Naive thymus-derived CD4-positive, alpha-beta T cell (primary cell): ENCODE measurements at regions of chr12 and their contacts with region 1.

Region 1: DNA sequence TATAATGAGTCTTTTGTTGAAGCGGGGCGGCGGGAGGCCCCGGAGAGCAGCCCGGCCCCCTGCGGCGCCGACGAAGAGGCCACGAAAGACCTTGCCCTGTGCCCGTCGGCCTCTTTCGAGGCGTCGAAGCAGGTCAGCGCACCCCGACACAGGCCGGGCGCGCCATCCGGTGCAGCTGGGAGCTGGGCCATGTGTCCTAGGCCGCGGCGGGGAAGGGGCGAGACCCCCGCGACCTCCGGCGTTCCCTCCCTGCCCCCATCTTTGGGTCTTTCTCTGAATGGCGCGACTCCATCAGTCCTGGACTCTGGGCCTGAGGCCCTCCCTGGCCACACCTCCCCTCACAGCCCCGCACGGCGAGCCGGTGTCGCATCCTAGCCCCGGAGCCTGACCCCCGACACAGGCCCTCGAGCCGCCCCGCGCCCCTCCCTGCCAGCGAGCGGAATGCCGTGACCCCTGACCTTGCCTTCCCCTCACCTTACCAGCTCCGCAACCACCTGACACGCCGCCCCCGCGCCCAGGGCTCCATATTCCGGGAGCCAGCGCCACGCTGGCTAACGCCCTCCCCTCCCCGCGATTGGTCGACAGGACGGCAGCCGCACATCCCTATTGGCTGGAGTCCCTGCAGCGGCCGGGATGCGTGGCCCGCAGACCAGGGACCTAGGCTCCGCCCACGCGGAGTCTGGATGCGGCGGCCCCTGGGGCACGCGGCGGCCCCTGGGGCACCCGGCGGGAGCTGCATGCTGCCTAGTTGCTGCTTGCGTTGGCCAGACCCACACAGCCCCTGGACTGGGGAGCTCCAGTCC is at the start of gene SLC11A2:
- DNase-seq: peak; percentile 79 to 93 (median 88)
- ATAC-seq: peak; percentile 96
- H3K4me3 ChIP-seq: peak within 1 kb of the TSS; percentile 86
- H3K4me3 Mint-ChIP-seq: peak within 1 kb of the TSS; percentile 91 to 100 (median 98)
- H3K27ac ChIP-seq: peak within 1 kb of the TSS; percentile 80
- H3K27ac Mint-ChIP-seq: peak within 1 kb of the TSS; percentile 90 to 99 (median 97)
- H3K4me1 ChIP-seq: peaks cover 14 to 22% of the 10 kb centered on the region in 2 donors
- H3K4me1 Mint-ChIP-seq: peaks cover 39 to 65% (median 54%) of the 10 kb centered on the region in 7 donors
- H3K27me3 ChIP-seq: no peaks in the 10 kb centered on the region
- H3K27me3 Mint-ChIP-seq: peaks cover 0 to 13% (median 0%) of the 10 kb centered on the region in 5 donors
- total RNA-seq, gene SLC11A2: 49.3 to 65.4 (median 61.0) TPM

Region 2: DNA sequence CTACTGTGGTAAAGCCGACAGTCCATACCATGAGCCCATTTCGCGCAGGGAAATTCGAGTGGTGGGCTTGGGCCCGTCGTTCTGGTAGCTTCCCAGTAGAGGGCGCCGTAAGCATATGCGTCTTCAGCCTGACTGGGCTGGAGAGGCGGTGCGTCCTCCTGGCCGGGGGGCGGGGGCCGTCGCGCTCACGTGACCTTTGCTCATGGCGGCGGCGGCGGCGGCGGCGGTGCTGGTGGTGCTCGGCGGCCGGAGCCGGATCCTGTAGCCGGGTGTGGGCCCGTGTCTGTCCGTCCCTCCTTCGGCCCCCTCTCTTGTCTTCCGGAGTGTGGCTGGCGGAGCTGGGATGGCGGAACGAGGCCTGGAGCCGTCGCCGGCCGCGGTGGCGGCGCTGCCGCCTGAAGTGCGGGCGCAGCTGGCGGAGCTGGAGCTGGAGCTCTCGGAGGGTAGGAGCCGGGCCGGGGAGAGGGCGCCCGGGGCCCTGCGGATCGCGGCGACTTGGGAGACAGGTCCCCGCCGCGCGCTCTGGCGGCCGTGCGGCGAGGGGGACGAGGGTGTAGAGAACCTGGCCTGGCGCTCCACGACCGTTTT is 521.1 kb before region 1 on chr12 and contains the start of gene DIP2B:
- CTCF ChIA-PET with region 1: no interaction called
- POLR2A ChIA-PET with region 1: interaction called, 3 read pairs
- intact Hi-C with region 1: loop called (anchors 5 kb)
- DNase-seq: peak; percentile 90 to 96 (median 94)
- ATAC-seq: peak; percentile 99
- H3K4me3 ChIP-seq: peak within 1 kb of the TSS; percentile 83
- H3K4me3 Mint-ChIP-seq: peak within 1 kb of the TSS; percentile 93 to 99 (median 98)
- H3K27ac ChIP-seq: peak within 1 kb of the TSS; percentile 93
- H3K27ac Mint-ChIP-seq: peak within 1 kb of the TSS; percentile 90 to 97 (median 94)
- H3K4me1 ChIP-seq: peaks cover 33 to 40% of the 10 kb centered on the region in 2 donors
- H3K4me1 Mint-ChIP-seq: peaks cover 36 to 49% (median 43%) of the 10 kb centered on the region in 7 donors
- H3K27me3 ChIP-seq: no peaks in the 10 kb centered on the region
- H3K27me3 Mint-ChIP-seq: no peaks in the 10 kb centered on the region
- total RNA-seq, gene DIP2B: 34.1 to 41.8 (median 39.9) TPM

Region 3: GRCh38 chr12:50597200-50598195 is 428.5 kb before region 1 on chr12:
- CTCF ChIA-PET with region 1: no interaction called
- POLR2A ChIA-PET with region 1: no interaction called
- intact Hi-C with region 1: no loop called
- DNase-seq: peak in 8 of 9 donors; percentile 8 to 55 (median 33)
- ATAC-seq: peak; percentile 88
- H3K4me3 ChIP-seq: no peak overlapping the region
- H3K4me3 Mint-ChIP-seq: peak overlapping the region in 9 of 10 donors; percentile 26 to 76 (median 62)
- H3K27ac ChIP-seq: peak overlapping the region; percentile 36
- H3K27ac Mint-ChIP-seq: peak overlapping the region in 8 of 9 donors; percentile 16 to 80 (median 58)
- H3K4me1 ChIP-seq: peaks cover 0 to 7% of the 10 kb centered on the region in 2 donors
- H3K4me1 Mint-ChIP-seq: peaks cover 38 to 76% (median 58%) of the 10 kb centered on the region in 7 donors
- H3K27me3 ChIP-seq: no peaks in the 10 kb centered on the region
- H3K27me3 Mint-ChIP-seq: no peaks in the 10 kb centered on the region

Region 4: DNA sequence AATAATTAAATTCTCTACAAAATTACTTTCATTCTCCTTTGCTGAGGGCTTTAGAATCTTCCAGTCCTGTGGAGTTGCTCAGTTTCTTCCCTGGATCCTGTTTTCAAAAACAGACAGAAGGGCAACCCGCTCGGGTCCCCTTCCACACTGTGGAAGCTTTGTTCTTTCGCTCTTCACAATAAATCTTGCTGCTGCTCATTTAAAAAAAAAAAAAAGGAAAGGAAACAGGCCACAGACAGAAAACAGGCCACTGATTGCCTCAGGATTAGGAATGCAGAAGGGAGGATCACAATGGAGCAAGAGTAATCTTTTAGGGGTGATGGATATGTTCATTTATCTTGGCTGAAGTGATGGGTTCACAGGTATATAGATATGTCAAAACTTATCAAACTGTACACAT is 103.2 kb before region 1 on chr12:
- CTCF ChIA-PET with region 1: no interaction called
- POLR2A ChIA-PET with region 1: no interaction called
- intact Hi-C with region 1: no loop called
- DNase-seq: no peak
- ATAC-seq: no peak
- H3K4me3 ChIP-seq: no peak overlapping the region
- H3K4me3 Mint-ChIP-seq: no peak overlapping the region
- H3K27ac ChIP-seq: no peak overlapping the region
- H3K27ac Mint-ChIP-seq: peak overlapping the region in 2 of 9 donors; percentile 3 to 79
- H3K4me1 ChIP-seq: peaks cover 0 to 9% of the 10 kb centered on the region in 2 donors
- H3K4me1 Mint-ChIP-seq: peaks cover 8 to 37% (median 24%) of the 10 kb centered on the region in 7 donors
- H3K27me3 ChIP-seq: no peaks in the 10 kb centered on the region
- H3K27me3 Mint-ChIP-seq: peaks cover 0 to 5% (median 0%) of the 10 kb centered on the region in 5 donors

Region 5: DNA sequence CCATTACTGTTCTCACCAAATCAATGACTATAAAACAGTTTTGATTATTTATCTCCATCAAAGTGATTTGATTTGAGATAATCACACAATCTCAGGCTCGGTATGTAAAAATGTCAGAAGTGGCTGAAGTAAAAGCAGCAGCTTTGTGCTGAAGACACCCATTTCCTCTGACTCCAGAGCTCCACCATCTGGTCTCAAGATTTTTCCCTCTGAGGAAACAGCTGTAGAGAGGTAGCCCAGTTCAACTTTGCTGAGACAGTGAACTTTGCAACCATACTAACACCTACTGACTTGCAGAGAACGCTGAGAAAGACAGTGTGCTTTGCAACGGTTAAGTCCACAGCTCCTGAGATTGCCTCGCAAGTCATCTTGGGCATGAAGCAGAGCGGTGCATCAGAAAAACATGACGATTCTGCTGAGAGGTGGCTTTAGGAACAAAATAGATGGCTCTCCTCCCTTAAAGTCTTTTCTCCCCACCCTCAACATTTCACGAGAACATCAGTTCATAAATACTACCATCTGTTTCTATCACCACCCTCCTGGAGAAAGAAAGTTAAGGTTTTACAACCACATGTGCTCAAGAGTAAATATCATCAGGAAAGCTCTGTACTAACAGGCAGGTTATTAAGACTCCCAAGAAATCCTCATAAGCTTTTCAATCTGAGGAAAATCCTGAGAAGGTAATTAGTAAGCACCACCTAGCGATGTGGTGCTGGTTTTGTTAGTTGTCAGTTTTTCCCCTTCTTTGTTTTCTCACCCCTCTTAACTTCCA is 38.9 kb before region 1 on chr12:
- CTCF ChIA-PET with region 1: interaction called, 8 read pairs
- POLR2A ChIA-PET with region 1: interaction called, 4 read pairs
- intact Hi-C with region 1: loop called (anchors 1 to 5 kb)
- DNase-seq: peak in 7 of 9 donors; percentile 14 to 56 (median 37)
- ATAC-seq: peak; percentile 53
- H3K4me3 ChIP-seq: no peak overlapping the region
- H3K4me3 Mint-ChIP-seq: no peak overlapping the region
- H3K27ac ChIP-seq: peak overlapping the region; percentile 4
- H3K27ac Mint-ChIP-seq: peak overlapping the region in 7 of 9 donors; percentile 6 to 87 (median 65)
- H3K4me1 ChIP-seq: no peaks in the 10 kb centered on the region
- H3K4me1 Mint-ChIP-seq: peaks cover 0 to 21% (median 9%) of the 10 kb centered on the region in 7 donors
- H3K27me3 ChIP-seq: no peaks in the 10 kb centered on the region
- H3K27me3 Mint-ChIP-seq: no peaks in the 10 kb centered on the region

Region 6: DNA sequence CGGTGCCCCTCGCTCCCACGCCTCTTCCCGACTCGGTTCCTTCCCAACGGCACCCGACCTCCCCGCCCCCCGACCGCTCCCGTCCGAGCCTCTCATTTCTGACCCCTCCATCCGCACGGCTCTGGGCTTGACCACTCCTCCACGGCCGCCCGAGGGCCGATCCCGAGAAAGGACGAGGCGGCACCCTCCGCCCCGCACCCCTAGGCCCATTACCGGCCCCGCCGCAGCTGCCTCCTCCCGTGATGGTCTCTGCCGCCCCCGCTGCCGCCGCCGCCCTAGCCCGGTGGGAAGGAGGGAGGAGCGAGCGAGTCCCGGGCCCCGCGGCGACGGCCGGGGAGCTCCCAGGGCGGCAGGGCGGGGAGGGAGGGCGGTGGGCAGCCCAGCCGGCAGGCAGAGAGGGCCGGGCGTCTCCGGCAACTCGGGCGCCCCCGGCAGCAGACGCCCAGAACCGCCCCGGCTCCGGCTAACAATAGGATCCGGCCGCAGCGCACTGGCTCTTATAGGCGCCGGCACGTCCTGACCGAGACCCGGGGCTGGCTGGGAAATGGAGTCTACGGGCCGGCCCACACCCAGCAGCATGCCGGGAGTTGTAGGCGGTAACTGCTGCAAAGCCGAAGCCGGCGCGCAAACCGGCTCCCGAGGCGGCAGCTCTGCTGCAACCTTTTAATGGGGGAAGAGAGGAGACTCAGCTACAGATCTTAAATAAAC is 57.2 kb after region 1 on chr12 and contains the start of gene CSRNP2:
- CTCF ChIA-PET with region 1: no interaction called
- POLR2A ChIA-PET with region 1: interaction called, 6 read pairs
- intact Hi-C with region 1: loop called (anchors 1 kb)
- DNase-seq: peak; percentile 90 to 95 (median 94)
- ATAC-seq: peak; percentile 100
- H3K4me3 ChIP-seq: peak within 1 kb of the TSS; percentile 78
- H3K4me3 Mint-ChIP-seq: peak within 1 kb of the TSS; percentile 89 to 100 (median 96)
- H3K27ac ChIP-seq: peak within 1 kb of the TSS; percentile 97
- H3K27ac Mint-ChIP-seq: peak within 1 kb of the TSS; percentile 89 to 98 (median 93)
- H3K4me1 ChIP-seq: peaks cover 7% of the 10 kb centered on the region in 2 donors
- H3K4me1 Mint-ChIP-seq: peaks cover 22 to 46% (median 43%) of the 10 kb centered on the region in 7 donors
- H3K27me3 ChIP-seq: no peaks in the 10 kb centered on the region
- H3K27me3 Mint-ChIP-seq: no peaks in the 10 kb centered on the region
- total RNA-seq, gene CSRNP2: 20.0 to 38.7 (median 23.4) TPM

Region 7: GRCh38 chr12:51238510-51239334 is 212.7 kb after region 1 on chr12 and contains the start of gene DAZAP2:
- CTCF ChIA-PET with region 1: no interaction called
- POLR2A ChIA-PET with region 1: interaction called, 11 read pairs
- intact Hi-C with region 1: loop called (anchors 1 to 5 kb)
- DNase-seq: peak; percentile 82 to 94 (median 92)
- ATAC-seq: peak; percentile 93
- H3K4me3 ChIP-seq: peak within 1 kb of the TSS; percentile 98
- H3K4me3 Mint-ChIP-seq: peak within 1 kb of the TSS; percentile 91 to 99 (median 97)
- H3K27ac ChIP-seq: peak within 1 kb of the TSS; percentile 100
- H3K27ac Mint-ChIP-seq: peak within 1 kb of the TSS; percentile 97 to 100 (median 100)
- H3K4me1 ChIP-seq: peaks cover 24 to 29% of the 10 kb centered on the region in 2 donors
- H3K4me1 Mint-ChIP-seq: peaks cover 36 to 50% (median 42%) of the 10 kb centered on the region in 7 donors
- H3K27me3 ChIP-seq: no peaks in the 10 kb centered on the region
- H3K27me3 Mint-ChIP-seq: peaks cover 0 to 4% (median 0%) of the 10 kb centered on the region in 5 donors
- total RNA-seq, gene DAZAP2: 231 to 306 (median 271) TPM

Region 8: DNA sequence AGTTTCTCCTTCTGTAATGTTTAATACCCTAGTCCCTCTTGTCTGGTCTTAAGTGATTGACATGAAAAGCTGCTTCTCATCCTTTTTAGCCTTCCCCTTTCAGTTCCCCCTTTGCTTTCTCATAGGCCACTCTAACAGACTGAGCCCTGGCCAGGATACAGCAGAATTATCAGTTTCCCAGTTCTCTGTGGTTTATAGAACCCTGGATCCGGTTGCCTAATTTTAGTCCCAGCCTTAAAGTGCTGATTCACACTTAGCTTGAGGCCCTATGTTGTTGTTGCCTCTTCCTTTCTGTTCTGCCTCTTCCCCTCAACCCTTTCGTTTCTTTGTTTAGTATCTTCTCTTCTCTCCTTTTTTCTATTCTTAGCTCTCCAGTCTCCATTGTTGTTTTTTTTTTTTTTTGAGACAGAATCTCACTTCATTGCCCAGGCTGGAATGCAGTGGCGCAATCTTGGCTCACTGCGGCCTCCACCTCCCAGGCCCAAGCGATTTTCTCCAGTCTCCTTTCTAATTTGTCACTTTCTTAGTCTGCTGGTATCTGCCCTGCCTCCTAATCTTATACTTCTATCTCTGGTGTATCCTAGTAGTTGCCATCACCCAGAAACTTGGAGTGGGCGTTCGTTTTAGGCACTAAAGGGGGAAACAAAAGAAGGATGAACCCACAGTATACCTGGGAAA is 300.9 kb after region 1 on chr12:
- CTCF ChIA-PET with region 1: no interaction called
- POLR2A ChIA-PET with region 1: no interaction called
- intact Hi-C with region 1: loop called in 1 of 2 experiments (anchors 5 kb)
- DNase-seq: peak in 2 of 9 donors; percentile 10 to 27
- ATAC-seq: peak; percentile 34
- H3K4me3 ChIP-seq: no peak overlapping the region
- H3K4me3 Mint-ChIP-seq: peak overlapping the region; percentile 49 to 85 (median 72)
- H3K27ac ChIP-seq: peak overlapping the region; percentile 60
- H3K27ac Mint-ChIP-seq: peak overlapping the region; percentile 76 to 96 (median 93)
- H3K4me1 ChIP-seq: peaks cover 51 to 67% of the 10 kb centered on the region in 2 donors
- H3K4me1 Mint-ChIP-seq: peaks cover 45 to 92% (median 67%) of the 10 kb centered on the region in 7 donors
- H3K27me3 ChIP-seq: no peaks in the 10 kb centered on the region
- H3K27me3 Mint-ChIP-seq: no peaks in the 10 kb centered on the region